ENCODE measurements at regions of chr3 and their contacts with region 1.

Region 1: DNA sequence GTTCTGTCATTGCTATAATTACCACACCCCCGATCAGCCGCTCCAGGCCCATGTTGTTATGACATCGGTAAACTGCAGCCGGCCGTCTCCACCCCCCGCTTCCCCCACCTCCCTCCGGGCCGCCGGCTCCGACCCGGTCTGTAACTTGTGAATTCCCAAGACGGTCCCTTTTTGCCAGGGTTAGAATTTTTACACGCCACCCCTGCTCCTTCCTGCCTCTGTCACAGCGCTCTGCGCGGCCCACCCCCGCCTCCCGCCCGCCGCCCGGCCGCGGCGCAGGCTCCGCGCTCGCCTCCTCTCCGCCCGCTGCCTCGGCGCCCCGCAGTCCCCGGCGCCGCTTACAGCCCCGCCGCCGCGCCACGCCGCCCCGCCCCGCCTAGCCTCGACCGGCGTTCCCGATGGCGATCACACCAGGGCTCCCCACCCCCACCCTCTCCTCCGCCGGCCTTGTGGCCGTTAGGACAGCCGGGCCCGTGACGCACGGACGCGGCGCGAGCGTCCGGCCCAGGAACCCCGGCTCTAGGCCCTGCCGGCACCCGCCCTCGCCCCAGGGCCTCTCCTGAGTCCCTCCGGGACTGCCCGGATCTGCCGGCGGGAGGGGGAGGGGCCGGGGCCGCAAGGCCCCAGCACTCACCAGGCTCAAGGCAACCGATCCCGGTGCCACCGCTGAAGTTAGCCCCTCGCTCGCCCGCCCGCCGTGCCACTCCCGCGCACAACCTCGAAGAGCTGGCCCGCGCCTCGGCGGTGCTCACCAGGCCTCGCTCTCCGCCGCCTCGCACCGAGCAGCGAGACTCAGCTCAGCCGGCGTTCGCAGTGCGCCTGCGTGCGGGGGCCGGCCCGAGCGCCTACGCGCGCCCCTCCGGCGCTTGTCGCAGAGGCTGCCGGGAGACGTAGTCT is at the start of gene KPNA1:
- DNase-seq: peak; percentile 80 to 86 (median 85)
- H3K4me3 ChIP-seq: peak within 1 kb of the TSS; percentile 56 to 93 (median 89)
- H3K4me3 Mint-ChIP-seq: peak within 1 kb of the TSS; percentile 82 to 94
- H3K27ac ChIP-seq: peak within 1 kb of the TSS; percentile 89 to 92
- H3K27ac Mint-ChIP-seq: peak within 1 kb of the TSS; percentile 88 to 99 (median 97)
- H3K4me1 ChIP-seq: peaks cover 17 to 28% of the 10 kb centered on the region in 2 donors
- H3K4me1 Mint-ChIP-seq: peaks cover 40% of the 10 kb centered on the region
- H3K27me3 ChIP-seq: no peaks in the 10 kb centered on the region
- H3K27me3 Mint-ChIP-seq: peaks cover 0 to 2% (median 0%) of the 10 kb centered on the region in 3 donors
- CTCF ChIP-seq: no peak
- polyA plus RNA-seq, gene KPNA1: 18.0 to 41.2 (median 38.5) TPM

Region 2: GRCh38 chr3:122415720-122416654 is 98.4 kb before region 1 on chr3 and contains the start of gene WDR5B:
- intact Hi-C with region 1: loop called in 1 of 2 experiments (anchors 10 kb)
- DNase-seq: peak; percentile 95 to 97 (median 96)
- H3K4me3 ChIP-seq: peak within 1 kb of the TSS; percentile 73 to 97 (median 94)
- H3K4me3 Mint-ChIP-seq: peak within 1 kb of the TSS; percentile 93 to 95
- H3K27ac ChIP-seq: peak within 1 kb of the TSS; percentile 79 to 92
- H3K27ac Mint-ChIP-seq: peak within 1 kb of the TSS; percentile 94 to 98 (median 95)
- H3K4me1 ChIP-seq: peaks cover 16 to 25% of the 10 kb centered on the region in 2 donors
- H3K4me1 Mint-ChIP-seq: peaks cover 33% of the 10 kb centered on the region
- H3K27me3 ChIP-seq: no peaks in the 10 kb centered on the region
- H3K27me3 Mint-ChIP-seq: no peaks in the 10 kb centered on the region
- CTCF ChIP-seq: no peak
- polyA plus RNA-seq, gene WDR5B: 0.85 to 3.1 (median 0.85) TPM

Region 3: GRCh38 chr3:122468896-122469533 is 45.4 kb before region 1 on chr3:
- intact Hi-C with region 1: loop called in 1 of 2 experiments (anchors 10 kb)
- DNase-seq: no peak
- H3K4me3 ChIP-seq: no peak overlapping the region
- H3K4me3 Mint-ChIP-seq: no peak overlapping the region
- H3K27ac ChIP-seq: no peak overlapping the region
- H3K27ac Mint-ChIP-seq: peak overlapping the region in 2 of 7 donors; percentile 46 to 72
- H3K4me1 ChIP-seq: no peaks in the 10 kb centered on the region
- H3K4me1 Mint-ChIP-seq: peaks cover 9% of the 10 kb centered on the region
- H3K27me3 ChIP-seq: no peaks in the 10 kb centered on the region
- H3K27me3 Mint-ChIP-seq: no peaks in the 10 kb centered on the region
- CTCF ChIP-seq: no peak

Region 4: DNA sequence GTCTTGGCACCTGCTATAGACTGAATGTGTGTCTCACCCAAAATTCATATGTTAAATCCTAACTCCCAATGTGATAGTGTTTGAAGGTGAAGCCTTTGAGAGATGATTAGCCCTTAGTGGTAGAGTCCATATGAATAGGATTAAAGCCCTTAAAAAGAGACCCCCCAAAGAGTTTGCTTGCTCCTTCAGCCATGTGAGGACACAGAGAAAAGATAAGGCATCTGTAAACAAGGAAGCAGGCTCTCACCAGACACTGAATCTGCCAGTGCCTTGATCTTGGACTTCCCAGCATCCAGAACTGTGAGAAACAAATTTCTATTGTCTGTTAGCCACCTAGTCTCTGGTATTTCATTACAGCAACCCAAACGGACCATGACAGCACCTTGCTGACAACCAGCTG is 16.2 kb before region 1 on chr3:
- intact Hi-C with region 1: loop called in 1 of 2 experiments (anchors 2 kb)
- DNase-seq: no peak
- H3K4me3 ChIP-seq: peak overlapping the region in 1 of 3 experiments; percentile 5
- H3K4me3 Mint-ChIP-seq: no peak overlapping the region
- H3K27ac ChIP-seq: peak overlapping the region in 1 of 2 donors; percentile 83
- H3K27ac Mint-ChIP-seq: peak overlapping the region; percentile 86 to 92 (median 88)
- H3K4me1 ChIP-seq: peaks cover 32 to 69% of the 10 kb centered on the region in 2 donors
- H3K4me1 Mint-ChIP-seq: peaks cover 67% of the 10 kb centered on the region
- H3K27me3 ChIP-seq: no peaks in the 10 kb centered on the region
- H3K27me3 Mint-ChIP-seq: no peaks in the 10 kb centered on the region
- CTCF ChIP-seq: no peak

Measured in CD14-positive monocyte (primary cell).